ENCODE measurements at regions of chr2 and their contacts with region 1.

Region 1: DNA sequence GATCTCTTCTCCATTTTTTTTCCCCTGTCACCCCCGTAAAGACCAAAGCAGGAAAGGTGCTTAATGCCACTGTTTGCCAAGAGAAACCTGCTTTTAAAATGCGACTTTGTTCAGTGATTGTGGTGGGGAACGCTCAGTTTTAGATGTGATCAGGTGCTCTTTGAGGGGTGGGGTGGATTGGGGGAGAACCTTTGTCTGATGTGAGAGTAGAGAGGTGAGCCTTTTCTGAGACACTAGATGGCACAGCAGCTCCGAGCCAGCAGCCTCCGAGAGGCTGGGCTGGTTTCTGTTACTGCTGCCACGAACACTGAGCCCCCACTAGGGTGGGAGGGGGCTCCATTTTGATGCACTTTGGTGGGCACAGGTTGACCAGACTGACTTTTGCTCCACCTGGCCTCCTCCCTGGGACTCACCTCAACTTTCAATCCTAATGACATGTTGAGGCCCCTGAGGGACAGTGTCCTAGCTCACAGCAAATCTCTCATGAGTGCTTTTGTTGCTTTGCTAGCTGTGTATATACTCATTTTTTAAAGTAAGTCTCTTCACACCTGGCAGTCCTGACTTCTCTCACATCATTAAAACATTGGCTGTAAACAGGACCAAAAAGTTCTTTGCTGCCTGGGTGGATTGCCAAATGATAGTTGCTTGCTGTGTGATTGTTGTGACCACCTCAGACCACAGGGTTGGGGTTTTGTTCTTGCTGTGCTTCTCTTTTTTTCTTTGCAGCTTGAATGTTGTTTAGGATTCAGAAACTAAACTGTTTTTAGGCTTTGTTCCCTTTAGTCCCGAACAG is 98.2 kb upstream of the MAP3K20 start:
- DNase-seq: no peak
- ATAC-seq: peak; percentile 79 to 95 (median 88)
- H3K4me3 ChIP-seq: no peak overlapping the region
- H3K27ac ChIP-seq: no peak overlapping the region
- H3K4me1 ChIP-seq: peaks cover 5% of the 10 kb centered on the region
- H3K27me3 ChIP-seq: no peaks in the 10 kb centered on the region
- CTCF ChIP-seq: peak; percentile 53

Region 2: DNA sequence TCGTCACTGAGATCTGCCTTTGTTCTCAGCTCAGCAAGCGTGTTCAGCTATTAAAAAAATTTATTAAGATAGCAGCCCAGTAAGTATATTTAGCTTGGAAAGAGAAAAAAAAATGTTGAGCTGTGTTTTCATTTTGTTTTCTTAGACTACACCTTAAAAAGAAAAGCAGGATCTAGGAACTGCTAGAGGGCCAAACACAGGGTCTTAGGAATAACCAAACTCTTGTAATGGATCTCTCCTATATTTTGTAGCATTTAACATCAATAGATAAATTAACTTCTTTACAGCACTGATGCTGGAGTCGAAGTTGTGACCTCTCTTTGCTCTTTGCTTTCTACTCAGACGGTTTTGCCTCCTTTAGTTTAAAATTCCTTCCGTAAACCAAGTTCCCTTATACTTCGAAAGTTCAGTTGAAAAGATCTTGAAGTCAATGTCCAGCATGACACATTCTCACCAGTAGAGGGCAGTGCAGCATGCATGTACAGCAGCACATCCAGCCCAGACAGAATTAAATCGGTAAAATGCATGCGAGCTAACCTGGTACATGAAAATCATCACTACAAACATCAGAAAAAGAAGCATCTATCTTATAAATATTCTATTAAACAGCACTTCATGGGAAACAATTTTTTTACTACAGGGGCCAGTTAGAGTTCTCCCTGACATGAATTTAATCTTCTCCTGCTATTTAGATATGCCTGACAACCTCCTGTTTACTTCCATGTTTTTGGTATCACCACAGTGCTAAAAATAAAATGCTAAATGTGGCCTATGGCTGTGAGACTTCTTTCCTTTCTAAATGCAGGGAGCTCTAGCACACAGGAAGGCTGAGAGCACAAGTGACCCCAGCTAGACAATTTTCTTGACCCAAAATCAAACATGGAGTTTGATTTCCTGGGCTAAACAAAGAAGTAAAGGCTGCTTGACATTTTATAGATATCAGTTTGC is 50.0 kb after region 1 on chr2:
- intact Hi-C with region 1: loop called in 1 of 2 experiments (anchors 2 kb)
- DNase-seq: peak; percentile 65 to 81
- ATAC-seq: peak; percentile 66 to 76 (median 71)
- H3K4me3 ChIP-seq: peak overlapping the region; percentile 27
- H3K27ac ChIP-seq: peak overlapping the region; percentile 92
- H3K4me1 ChIP-seq: peaks cover 50% of the 10 kb centered on the region
- H3K27me3 ChIP-seq: no peaks in the 10 kb centered on the region
- CTCF ChIP-seq: peak; percentile 97

Region 3: GRCh38 chr2:173134703-173135102 is 157.2 kb after region 1 on chr2:
- intact Hi-C with region 1: no loop called
- DNase-seq: no peak
- ATAC-seq: peak in 3 of 4 donors; percentile 25 to 44 (median 27)
- H3K4me3 ChIP-seq: no peak overlapping the region
- H3K27ac ChIP-seq: peak overlapping the region; percentile 59
- H3K4me1 ChIP-seq: peaks cover 81% of the 10 kb centered on the region
- H3K27me3 ChIP-seq: no peaks in the 10 kb centered on the region
- CTCF ChIP-seq: no peak